Activated CD4-positive, alpha-beta memory T cell treated with anti-CD3 and anti-CD28 coated beads, Interleukin-2, amount 10 ng/mL, durations not matched to agents 7 days and 5 days (primary cell): ENCODE measurements at regions of chr7 and their contacts with region 1.

Region 1: GRCh38 chr7:43582503-43583423 is at the start of gene STK17A:
- DNase-seq: peak; percentile 96
- H3K4me3 Mint-ChIP-seq: peak within 1 kb of the TSS; percentile 100
- H3K27ac Mint-ChIP-seq: peak within 1 kb of the TSS; percentile 100
- H3K4me1 Mint-ChIP-seq: peaks cover 31% of the 10 kb centered on the region
- H3K27me3 Mint-ChIP-seq: peaks cover 19% of the 10 kb centered on the region
- total RNA-seq, gene STK17A: 89.5 to 90.3 TPM

Region 2: DNA sequence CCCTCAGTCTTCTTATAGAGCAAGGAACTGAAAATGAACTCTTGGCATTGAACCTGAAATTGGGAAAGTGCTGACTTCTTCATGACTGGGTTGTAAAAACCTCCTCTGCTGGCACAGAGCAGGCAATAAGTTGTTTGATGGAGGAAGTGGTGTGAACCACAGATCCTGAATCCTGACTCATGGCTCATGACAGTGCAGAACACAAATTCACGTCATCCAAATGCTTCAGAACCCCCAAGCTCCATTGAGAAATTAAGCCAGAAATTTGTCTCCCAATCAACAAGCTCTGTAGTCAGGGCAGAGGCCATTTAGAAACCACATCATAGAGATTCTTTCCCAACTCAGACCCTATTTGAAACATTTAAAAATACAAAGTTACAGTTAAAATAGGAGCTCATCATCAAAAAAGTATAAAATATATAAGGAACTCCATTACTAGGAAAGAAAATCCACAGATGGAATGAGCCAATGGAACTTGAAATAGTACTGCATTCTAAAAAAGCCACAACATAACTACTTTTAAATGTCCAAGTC is 10.2 kb before region 1 on chr7:
- CTCF ChIA-PET with region 1: interaction called, 75 read pairs
- POLR2A ChIA-PET with region 1: interaction called, 25 read pairs
- DNase-seq: peak; percentile 69
- H3K4me3 Mint-ChIP-seq: no peak overlapping the region
- H3K27ac Mint-ChIP-seq: peak overlapping the region; percentile 42
- H3K4me1 Mint-ChIP-seq: peaks cover 45% of the 10 kb centered on the region
- H3K27me3 Mint-ChIP-seq: no peaks in the 10 kb centered on the region

Region 3: DNA sequence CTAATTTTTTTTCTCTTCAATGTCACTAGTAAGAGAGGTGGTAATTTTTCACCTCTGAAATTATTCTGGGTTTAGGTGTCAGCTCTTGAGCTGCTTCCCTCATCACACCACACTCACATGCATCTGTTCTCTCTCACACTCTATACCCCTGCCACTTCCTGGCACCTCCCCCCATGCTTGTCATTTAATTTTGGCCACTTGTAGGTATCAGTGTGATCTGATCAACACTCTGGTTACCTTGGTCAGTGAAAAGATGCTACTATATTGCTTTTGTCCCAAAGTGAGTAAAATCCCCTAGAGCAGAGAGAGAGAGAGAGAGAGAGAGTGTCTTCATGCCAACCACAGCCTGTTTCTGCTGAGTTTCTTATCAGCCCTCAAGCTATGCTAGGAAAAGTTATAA is 42.7 kb after region 1 on chr7:
- CTCF ChIA-PET with region 1: interaction called, 35 read pairs
- POLR2A ChIA-PET with region 1: interaction called, 33 read pairs
- DNase-seq: peak; percentile 65
- H3K4me3 Mint-ChIP-seq: no peak overlapping the region
- H3K27ac Mint-ChIP-seq: peak overlapping the region; percentile 65
- H3K4me1 Mint-ChIP-seq: peaks cover 75% of the 10 kb centered on the region
- H3K27me3 Mint-ChIP-seq: no peaks in the 10 kb centered on the region

Region 4: GRCh38 chr7:43658718-43659548 is 76.2 kb after region 1 on chr7:
- CTCF ChIA-PET with region 1: interaction called, 12 read pairs
- POLR2A ChIA-PET with region 1: interaction called, 8 read pairs
- DNase-seq: no peak
- H3K4me3 Mint-ChIP-seq: peak overlapping the region; percentile 36
- H3K27ac Mint-ChIP-seq: peak overlapping the region; percentile 89
- H3K4me1 Mint-ChIP-seq: peaks cover 54% of the 10 kb centered on the region
- H3K27me3 Mint-ChIP-seq: no peaks in the 10 kb centered on the region

Region 5: DNA sequence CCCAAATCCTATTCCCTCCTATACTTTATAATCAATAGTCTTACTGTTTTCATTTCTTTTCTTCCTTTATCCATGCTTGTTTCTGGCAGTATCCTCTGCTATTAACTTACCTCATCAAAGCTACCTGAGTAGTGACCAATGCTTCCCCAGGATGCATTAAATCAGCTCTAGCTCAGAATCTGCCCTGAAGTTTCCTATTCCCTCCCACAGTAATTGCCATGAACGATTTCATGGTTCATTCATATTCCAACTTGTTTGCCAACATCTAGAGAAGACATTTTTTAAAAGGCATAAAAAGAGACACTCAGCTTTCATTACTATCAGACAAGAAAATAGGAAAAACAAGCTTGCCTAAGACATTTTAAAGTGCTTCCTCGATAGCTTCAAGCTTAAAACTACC is 104.2 kb after region 1 on chr7:
- CTCF ChIA-PET with region 1: interaction called, 24 read pairs
- POLR2A ChIA-PET with region 1: interaction called, 5 read pairs
- DNase-seq: no peak
- H3K4me3 Mint-ChIP-seq: no peak overlapping the region
- H3K27ac Mint-ChIP-seq: no peak overlapping the region
- H3K4me1 Mint-ChIP-seq: peaks cover 7% of the 10 kb centered on the region
- H3K27me3 Mint-ChIP-seq: no peaks in the 10 kb centered on the region

Region 6: GRCh38 chr7:43721193-43721806 is 138.5 kb after region 1 on chr7:
- CTCF ChIA-PET with region 1: interaction called, 118 read pairs
- POLR2A ChIA-PET with region 1: interaction called, 18 read pairs
- DNase-seq: no peak
- H3K4me3 Mint-ChIP-seq: no peak overlapping the region
- H3K27ac Mint-ChIP-seq: no peak overlapping the region
- H3K4me1 Mint-ChIP-seq: peaks cover 31% of the 10 kb centered on the region
- H3K27me3 Mint-ChIP-seq: no peaks in the 10 kb centered on the region

Region 7: GRCh38 chr7:43834463-43835251 is 251.9 kb after region 1 on chr7:
- CTCF ChIA-PET with region 1: interaction called, 67 read pairs
- POLR2A ChIA-PET with region 1: interaction called, 29 read pairs
- DNase-seq: peak; percentile 37
- H3K4me3 Mint-ChIP-seq: peak overlapping the region; percentile 84
- H3K27ac Mint-ChIP-seq: peak overlapping the region; percentile 63
- H3K4me1 Mint-ChIP-seq: peaks cover 25% of the 10 kb centered on the region
- H3K27me3 Mint-ChIP-seq: peaks cover 4% of the 10 kb centered on the region

Region 8: GRCh38 chr7:44735403-44736165 is 1152.8 kb after region 1 on chr7:
- CTCF ChIA-PET with region 1: no interaction called
- POLR2A ChIA-PET with region 1: no interaction called
- DNase-seq: peak; percentile 60
- H3K4me3 Mint-ChIP-seq: no peak overlapping the region
- H3K27ac Mint-ChIP-seq: peak overlapping the region; percentile 54
- H3K4me1 Mint-ChIP-seq: peaks cover 13% of the 10 kb centered on the region
- H3K27me3 Mint-ChIP-seq: no peaks in the 10 kb centered on the region